SK-N-SH (cell line): ENCODE measurements at regions of chr11 and their contacts with region 1.

Region 1: DNA sequence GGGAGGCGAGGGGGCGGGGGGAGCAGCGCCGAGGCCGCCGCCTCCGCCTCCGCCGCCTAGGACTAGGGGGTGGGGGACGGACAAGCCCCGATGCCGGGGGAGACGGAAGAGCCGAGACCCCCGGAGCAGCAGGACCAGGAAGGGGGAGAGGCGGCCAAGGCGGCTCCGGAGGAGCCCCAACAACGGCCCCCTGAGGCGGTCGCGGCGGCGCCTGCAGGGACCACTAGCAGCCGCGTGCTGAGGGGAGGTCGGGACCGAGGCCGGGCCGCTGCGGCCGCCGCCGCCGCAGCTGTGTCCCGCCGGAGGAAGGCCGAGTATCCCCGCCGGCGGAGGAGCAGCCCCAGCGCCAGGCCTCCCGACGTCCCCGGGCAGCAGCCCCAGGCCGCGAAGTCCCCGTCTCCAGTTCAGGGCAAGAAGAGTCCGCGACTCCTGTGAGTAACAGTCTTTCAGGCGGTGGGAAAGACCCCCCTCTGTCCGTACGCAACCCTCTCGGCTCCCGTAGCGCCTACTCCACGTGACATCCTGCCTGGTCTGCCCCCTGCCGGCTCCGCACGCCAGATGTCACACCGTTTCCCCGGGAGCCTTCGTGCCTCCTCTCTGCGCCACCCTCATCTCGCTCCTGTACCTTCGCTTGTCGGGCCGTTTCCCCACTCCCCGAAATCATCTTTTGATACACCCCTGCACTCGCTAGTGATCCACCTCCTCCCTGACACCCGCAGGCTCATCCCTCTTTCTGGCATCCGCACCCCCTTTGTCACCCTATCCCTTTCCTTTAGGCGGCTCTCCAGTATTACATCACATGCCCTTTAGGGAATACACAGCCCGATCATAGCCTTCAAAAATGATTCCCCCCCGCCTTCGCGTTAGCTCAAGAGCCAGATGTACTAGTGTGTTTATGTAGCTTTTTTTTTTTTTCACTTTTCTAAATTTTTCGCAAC is 598 bp downstream of the ZFP91 start:
- DNase-seq: peak; percentile 80
- H3K4me3 ChIP-seq: peak overlapping the region; percentile 78 to 97
- H3K27ac ChIP-seq: peak overlapping the region; percentile 94 to 95
- H3K4me1 ChIP-seq: peaks cover 15 to 48% of the 10 kb centered on the region in 2 experiments
- H3K27me3 ChIP-seq: no peaks in the 10 kb centered on the region
- CTCF ChIP-seq: peak; percentile 76
- EP300 ChIP-seq: no peak
- RAD21 ChIP-seq: 0 out of 2 replicates have a peak, but pooled peaks have one; percentile 3

Region 2: GRCh38 chr11:58485961-58486360 is 93.5 kb before region 1 on chr11:
- CTCF ChIA-PET with region 1: no interaction called
- POLR2A ChIA-PET with region 1: no interaction called
- DNase-seq: no peak
- H3K4me3 ChIP-seq: no peak overlapping the region
- H3K27ac ChIP-seq: no peak overlapping the region
- H3K4me1 ChIP-seq: no peaks in the 10 kb centered on the region
- H3K27me3 ChIP-seq: no peaks in the 10 kb centered on the region
- CTCF ChIP-seq: no peak
- EP300 ChIP-seq: no peak
- RAD21 ChIP-seq: no peak

Region 3: DNA sequence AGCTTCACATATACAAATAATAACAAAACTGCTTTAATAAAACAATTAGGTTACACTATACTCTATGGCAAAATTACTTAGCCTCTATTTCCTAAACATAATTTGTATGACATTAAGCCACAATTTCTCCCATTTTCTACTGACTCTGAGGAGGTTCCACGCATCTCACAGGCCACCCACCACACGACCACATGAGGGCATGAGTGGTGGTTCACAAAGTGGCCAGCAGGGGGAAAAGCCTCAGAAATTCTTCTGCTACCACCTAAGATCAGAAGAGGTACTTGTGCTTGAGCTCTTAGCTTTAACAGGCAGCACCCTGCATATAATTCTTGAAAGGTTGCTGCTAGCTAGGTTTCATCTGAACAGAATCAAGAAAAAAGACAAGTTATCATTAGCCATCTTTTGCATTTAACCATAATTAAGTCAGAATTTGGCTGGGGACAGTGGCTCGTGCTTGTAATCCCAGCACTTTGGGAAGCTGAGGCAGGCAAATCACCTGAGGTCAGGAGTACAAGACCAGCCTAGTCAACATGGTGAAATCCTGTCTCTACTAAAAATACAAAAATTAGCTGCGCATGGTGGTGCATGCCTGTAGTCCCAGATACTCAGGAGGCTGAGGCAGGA is 11.5 kb before region 1 on chr11:
- CTCF ChIA-PET with region 1: interaction called, 26 read pairs
- POLR2A ChIA-PET with region 1: interaction called, 3 read pairs
- DNase-seq: peak; percentile 52
- H3K4me3 ChIP-seq: no peak overlapping the region
- H3K27ac ChIP-seq: no peak overlapping the region
- H3K4me1 ChIP-seq: peaks cover 0 to 4% of the 10 kb centered on the region in 2 experiments; a peak in 1 of 4 replicates
- H3K27me3 ChIP-seq: no peaks in the 10 kb centered on the region
- CTCF ChIP-seq: peak; percentile 80
- EP300 ChIP-seq: no peak
- RAD21 ChIP-seq: peak; percentile 45